ENCODE measurements at regions of chrX and their contacts with region 1.

Region 1: DNA sequence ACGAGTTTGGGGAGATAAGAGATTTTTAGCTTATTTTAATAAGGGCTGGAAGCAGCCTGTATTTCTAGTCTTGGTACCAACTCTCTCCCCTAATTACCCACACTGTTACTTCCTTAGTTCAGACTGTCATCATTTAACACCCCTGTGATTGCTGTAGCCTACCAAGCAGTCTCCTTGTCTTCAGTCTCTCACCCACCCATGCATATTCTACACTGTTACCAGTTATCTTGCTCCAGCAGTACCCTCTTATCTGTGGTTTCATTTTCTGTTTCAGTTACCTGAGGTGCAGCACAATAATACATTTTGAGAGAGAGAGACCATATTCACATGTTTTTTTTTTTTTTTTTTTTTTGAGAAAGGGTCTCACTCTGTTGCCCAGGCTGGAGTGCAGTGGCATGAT is 80.2 kb downstream of the DIAPH2 start:
- DNase-seq: no peak
- H3K4me3 ChIP-seq: no peak overlapping the region
- H3K27ac ChIP-seq: no peak overlapping the region
- H3K4me1 ChIP-seq: no peaks in the 10 kb centered on the region
- H3K27me3 ChIP-seq: peaks cover 4% of the 10 kb centered on the region
- CTCF ChIP-seq: no peak

Region 2: DNA sequence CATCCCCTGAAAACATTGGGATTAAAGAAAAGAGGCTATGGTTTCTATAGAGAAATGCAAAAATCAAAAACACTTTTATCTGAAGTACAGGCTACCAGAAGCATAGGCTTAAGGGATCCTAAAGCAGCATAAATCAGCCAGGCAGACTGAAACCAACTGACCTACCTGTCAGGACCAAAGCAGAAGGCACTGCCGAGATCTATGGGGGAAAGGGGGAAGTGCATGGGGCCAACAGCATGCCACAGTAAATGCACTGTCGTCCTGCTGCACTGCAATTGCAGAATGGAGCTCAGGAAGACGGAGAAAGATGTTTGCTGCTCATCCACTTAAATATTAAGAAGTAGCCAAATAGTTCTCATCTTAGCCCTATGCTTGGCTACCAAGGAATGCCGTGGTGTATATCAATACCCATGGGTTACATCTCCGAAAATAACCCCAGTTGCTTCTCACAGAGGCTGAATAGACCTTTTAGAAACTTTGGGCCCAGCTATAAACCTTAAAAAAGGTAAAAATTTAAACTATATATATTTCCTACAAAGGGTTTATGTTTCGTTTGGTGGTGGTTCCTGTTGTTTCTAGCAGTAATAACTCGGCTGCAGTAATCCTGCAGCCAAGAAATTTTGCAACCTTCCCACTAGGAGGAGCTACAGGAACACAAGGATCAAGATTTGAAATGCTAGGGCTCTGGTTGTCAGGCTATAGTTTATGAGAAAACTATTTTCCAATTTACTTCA is 392.4 kb before region 1 on chrX:
- CTCF ChIA-PET with region 1: no interaction called
- POLR2A ChIA-PET with region 1: no interaction called
- intact Hi-C with region 1: loop called (anchors 10 kb)
- DNase-seq: peak; percentile 58
- H3K4me3 ChIP-seq: no peak overlapping the region
- H3K27ac ChIP-seq: no peak overlapping the region
- H3K4me1 ChIP-seq: no peaks in the 10 kb centered on the region
- H3K27me3 ChIP-seq: peaks cover 4% of the 10 kb centered on the region
- CTCF ChIP-seq: peak; percentile 67

Measured in A673 (cell line).